ENCODE measurements at regions of chr13 and their contacts with region 1.

Region 1: DNA sequence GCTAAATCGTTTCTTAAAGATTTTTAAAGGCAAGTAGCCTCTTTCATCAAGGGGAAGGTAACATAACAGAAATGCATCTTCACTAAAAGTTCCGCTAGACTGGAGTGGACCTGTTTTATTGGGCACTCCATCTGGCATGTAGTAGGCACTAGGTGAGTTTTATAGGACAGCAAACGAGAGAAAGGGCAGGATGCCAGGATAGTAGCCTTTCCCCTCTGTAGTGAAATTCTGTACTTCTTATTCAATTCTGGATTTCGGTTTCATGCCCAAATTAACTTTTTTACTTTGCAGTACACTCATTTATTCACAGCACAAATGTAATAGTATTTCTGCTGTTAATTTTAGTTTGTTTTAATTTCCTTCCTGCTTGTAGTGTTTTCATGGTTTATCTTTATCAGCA is 45.2 kb downstream of the GPR180 start:
- DNase-seq: no peak
- ATAC-seq: no peak
- H3K4me3 ChIP-seq: no peak overlapping the region
- H3K4me3 Mint-ChIP-seq: no peak overlapping the region
- H3K27ac ChIP-seq: no peak overlapping the region
- H3K27ac Mint-ChIP-seq: no peak overlapping the region
- H3K4me1 ChIP-seq: no peaks in the 10 kb centered on the region
- H3K4me1 Mint-ChIP-seq: no peaks in the 10 kb centered on the region
- H3K27me3 ChIP-seq: no peaks in the 10 kb centered on the region
- H3K27me3 Mint-ChIP-seq: peaks cover 0 to 3% of the 10 kb centered on the region in 2 donors

Region 2: GRCh38 chr13:94739235-94739634 is 92.3 kb after region 1 on chr13:
- CTCF ChIA-PET with region 1: no interaction called
- POLR2A ChIA-PET with region 1: interaction called in 1 of 2 experiments, 10 read pairs
- DNase-seq: no peak
- ATAC-seq: no peak
- H3K4me3 ChIP-seq: no peak overlapping the region
- H3K4me3 Mint-ChIP-seq: no peak overlapping the region
- H3K27ac ChIP-seq: no peak overlapping the region
- H3K27ac Mint-ChIP-seq: no peak overlapping the region
- H3K4me1 ChIP-seq: no peaks in the 10 kb centered on the region
- H3K4me1 Mint-ChIP-seq: no peaks in the 10 kb centered on the region
- H3K27me3 ChIP-seq: peaks cover 0 to 2% of the 10 kb centered on the region in 2 experiments
- H3K27me3 Mint-ChIP-seq: peaks cover 22% of the 10 kb centered on the region in 2 donors

Measured in T-cell (primary cell).